ENCODE measurements at regions of chr1 and their contacts with region 1.

Region 1: GRCh38 chr1:210373885-210374599 is 45.3 kb downstream of the HHAT start:
- DNase-seq: peak; percentile 89 to 90
- H3K4me3 ChIP-seq: no peak overlapping the region; a peak in 1 of 8 replicates
- H3K27ac ChIP-seq: peak overlapping the region; percentile 97
- H3K4me1 ChIP-seq: peaks cover 7 to 24% (median 18%) of the 10 kb centered on the region in 4 experiments
- H3K27me3 ChIP-seq: peaks cover 0 to 5% (median 2%) of the 10 kb centered on the region in 4 experiments; a peak in 1 of 7 replicates
- CTCF ChIP-seq: peak; percentile 66 to 96 (median 80)
- EP300 ChIP-seq: peak in 1 of 2 experiments; percentile 87; a peak in 1 of 3 replicates
- POLR2A ChIP-seq: peak; percentile 97 to 100
- RAD21 ChIP-seq: peak; percentile 59 to 68; a peak in 3 of 4 replicates

Region 2: DNA sequence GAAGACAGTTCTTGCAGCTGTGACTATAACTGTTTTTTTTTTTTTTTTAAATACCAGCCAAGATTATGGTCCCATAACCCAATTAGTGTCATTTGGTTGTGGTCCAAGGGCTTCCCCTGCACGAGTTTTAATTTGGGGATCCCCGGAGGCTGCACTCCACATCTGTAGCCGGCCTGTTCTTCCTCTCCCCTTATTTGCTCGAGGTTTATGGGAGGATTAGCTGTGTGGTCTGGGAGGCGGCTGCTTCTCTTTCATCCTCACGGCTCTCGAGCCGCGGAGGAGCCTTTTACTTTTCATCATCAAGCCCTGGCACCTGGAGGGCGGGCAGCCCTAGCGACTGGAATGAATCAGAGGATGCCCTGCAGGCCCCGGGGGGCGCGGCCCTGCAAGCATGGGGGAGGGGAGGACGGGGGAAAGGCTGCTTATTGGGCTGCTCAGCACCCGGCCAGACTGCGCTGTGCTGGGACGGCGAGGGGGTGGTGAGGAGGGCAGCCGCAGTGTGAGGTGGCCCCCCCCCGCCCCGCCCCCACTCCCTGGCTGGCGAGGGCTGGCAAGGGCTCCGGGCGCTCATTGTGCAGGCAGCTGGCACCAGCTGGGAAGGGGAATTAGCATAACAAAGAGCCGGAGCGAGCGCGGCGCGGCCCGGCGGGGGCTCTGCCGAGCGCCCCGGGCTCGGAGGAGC is 122.9 kb before region 1 on chr1:
- CTCF ChIA-PET with region 1: no interaction called
- POLR2A ChIA-PET with region 1: interaction called, 40 read pairs
- DNase-seq: peak; percentile 83 to 86
- H3K4me3 ChIP-seq: peak overlapping the region; percentile 62 to 67 (median 66)
- H3K27ac ChIP-seq: no peak overlapping the region
- H3K4me1 ChIP-seq: peaks cover 0 to 17% (median 11%) of the 10 kb centered on the region in 4 experiments; a peak in 5 of 7 replicates
- H3K27me3 ChIP-seq: peaks cover 0 to 22% (median 17%) of the 10 kb centered on the region in 4 experiments; a peak in 6 of 7 replicates
- CTCF ChIP-seq: no peak
- EP300 ChIP-seq: 0 out of 3 replicates have a peak, but pooled peaks of 1 of the 2 experiments have one; percentile 26
- POLR2A ChIP-seq: no peak; a peak in 1 of 3 replicates
- RAD21 ChIP-seq: no peak

Region 3: GRCh38 chr1:210301615-210302000 is 72.4 kb before region 1 on chr1:
- CTCF ChIA-PET with region 1: no interaction called
- POLR2A ChIA-PET with region 1: interaction called, 14 read pairs
- DNase-seq: no peak
- H3K4me3 ChIP-seq: no peak overlapping the region
- H3K27ac ChIP-seq: no peak overlapping the region
- H3K4me1 ChIP-seq: peaks cover 0 to 3% (median 0%) of the 10 kb centered on the region in 4 experiments; a peak in 1 of 7 replicates
- H3K27me3 ChIP-seq: no peaks in the 10 kb centered on the region
- CTCF ChIP-seq: no peak
- EP300 ChIP-seq: no peak
- POLR2A ChIP-seq: no peak
- RAD21 ChIP-seq: no peak

Region 4: GRCh38 chr1:210360852-210361477 is 13.1 kb before region 1 on chr1:
- CTCF ChIA-PET with region 1: interaction called, 50 read pairs
- POLR2A ChIA-PET with region 1: interaction called, 183 read pairs
- DNase-seq: no peak
- H3K4me3 ChIP-seq: no peak overlapping the region
- H3K27ac ChIP-seq: no peak overlapping the region
- H3K4me1 ChIP-seq: peaks cover 6 to 14% (median 12%) of the 10 kb centered on the region in 4 experiments; a peak in 5 of 7 replicates
- H3K27me3 ChIP-seq: no peaks in the 10 kb centered on the region
- CTCF ChIP-seq: peak in 2 of 3 experiments; percentile 31 to 50; a peak in 2 of 4 replicates
- EP300 ChIP-seq: no peak
- POLR2A ChIP-seq: no peak
- RAD21 ChIP-seq: peak; percentile 64 to 66

Region 5: DNA sequence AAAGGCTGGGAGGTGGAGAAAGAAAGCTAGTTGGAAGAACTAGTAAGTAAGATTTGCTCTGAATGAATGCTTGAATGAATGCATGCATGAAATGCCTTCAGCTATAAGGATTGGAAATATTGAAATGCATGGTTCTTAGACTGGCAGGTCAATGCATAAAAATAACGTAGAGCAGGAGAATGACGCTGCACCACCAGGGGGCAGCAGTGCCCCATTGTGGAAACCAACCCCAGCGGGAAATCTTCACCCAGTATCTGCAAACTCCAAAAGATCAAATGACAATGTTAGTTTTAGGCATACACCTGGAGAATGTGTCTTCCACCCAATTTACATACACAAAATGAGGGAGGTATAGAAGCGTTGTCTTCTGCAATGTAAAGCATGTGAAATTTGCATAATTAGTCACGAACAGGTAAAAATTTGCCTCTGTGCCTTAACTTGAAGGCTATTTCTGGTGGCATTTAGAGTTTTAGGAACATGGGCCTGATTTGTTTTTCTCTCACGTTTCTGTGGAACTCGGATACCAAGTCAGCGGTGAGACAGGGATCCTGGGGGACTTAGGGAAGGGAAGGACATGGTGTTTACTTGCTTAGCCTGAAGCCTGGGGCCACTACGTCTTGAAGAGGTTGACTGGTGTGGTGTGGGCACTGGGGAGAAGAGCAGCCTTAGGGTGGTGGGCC is 33.3 kb after region 1 on chr1:
- CTCF ChIA-PET with region 1: interaction called, 179 read pairs
- POLR2A ChIA-PET with region 1: interaction called, 197 read pairs
- DNase-seq: peak; percentile 41 to 95
- H3K4me3 ChIP-seq: no peak overlapping the region
- H3K27ac ChIP-seq: no peak overlapping the region
- H3K4me1 ChIP-seq: peaks cover 0 to 6% (median 2%) of the 10 kb centered on the region in 4 experiments; a peak in 3 of 7 replicates
- H3K27me3 ChIP-seq: no peaks in the 10 kb centered on the region
- CTCF ChIP-seq: peak; percentile 79 to 85 (median 84)
- EP300 ChIP-seq: no peak
- POLR2A ChIP-seq: no peak
- RAD21 ChIP-seq: peak; percentile 93 to 94

Region 6: GRCh38 chr1:211258756-211259637 is 885.0 kb after region 1 on chr1 and contains the start of gene RCOR3:
- CTCF ChIA-PET with region 1: interaction called, 3 read pairs
- POLR2A ChIA-PET with region 1: interaction called, 16 read pairs
- DNase-seq: peak; percentile 70 to 95
- H3K4me3 ChIP-seq: peak within 1 kb of the TSS; percentile 77 to 88 (median 84)
- H3K27ac ChIP-seq: peak within 1 kb of the TSS; percentile 97
- H3K4me1 ChIP-seq: no peaks in the 10 kb centered on the region; a peak in 1 of 7 replicates
- H3K27me3 ChIP-seq: no peaks in the 10 kb centered on the region
- CTCF ChIP-seq: peak; percentile 55 to 68 (median 62); a peak in 3 of 4 replicates
- EP300 ChIP-seq: 0 out of 3 replicates have a peak, but pooled peaks of 1 of the 2 experiments have one; percentile 19
- POLR2A ChIP-seq: peak; percentile 66 to 83
- RAD21 ChIP-seq: peak; percentile 29 to 38; a peak in 2 of 4 replicates
- total RNA-seq, gene RCOR3: 28.0 and 36.3 TPM in 2 replicates